ENCODE measurements at regions of chr14 and their contacts with region 1.

Region 1: GRCh38 chr14:70821584-70822529 is 12.5 kb upstream of the MAP3K9 start:
- DNase-seq: peak; percentile 70 to 90
- ATAC-seq: peak; percentile 59
- H3K4me3 ChIP-seq: peak overlapping the region; percentile 37 to 58
- H3K27ac ChIP-seq: no peak overlapping the region
- H3K4me1 ChIP-seq: no peaks in the 10 kb centered on the region
- H3K27me3 ChIP-seq: no peaks in the 10 kb centered on the region

Region 2: GRCh38 chr14:70901269-70901668 is 79.4 kb after region 1 on chr14:
- intact Hi-C with region 1: loop called (anchors 5 to 10 kb)
- DNase-seq: no peak
- ATAC-seq: no peak
- H3K4me3 ChIP-seq: no peak overlapping the region
- H3K27ac ChIP-seq: peak overlapping the region in 1 of 2 donors; percentile 93
- H3K4me1 ChIP-seq: peaks cover 12 to 14% of the 10 kb centered on the region in 2 donors
- H3K27me3 ChIP-seq: no peaks in the 10 kb centered on the region

Region 3: DNA sequence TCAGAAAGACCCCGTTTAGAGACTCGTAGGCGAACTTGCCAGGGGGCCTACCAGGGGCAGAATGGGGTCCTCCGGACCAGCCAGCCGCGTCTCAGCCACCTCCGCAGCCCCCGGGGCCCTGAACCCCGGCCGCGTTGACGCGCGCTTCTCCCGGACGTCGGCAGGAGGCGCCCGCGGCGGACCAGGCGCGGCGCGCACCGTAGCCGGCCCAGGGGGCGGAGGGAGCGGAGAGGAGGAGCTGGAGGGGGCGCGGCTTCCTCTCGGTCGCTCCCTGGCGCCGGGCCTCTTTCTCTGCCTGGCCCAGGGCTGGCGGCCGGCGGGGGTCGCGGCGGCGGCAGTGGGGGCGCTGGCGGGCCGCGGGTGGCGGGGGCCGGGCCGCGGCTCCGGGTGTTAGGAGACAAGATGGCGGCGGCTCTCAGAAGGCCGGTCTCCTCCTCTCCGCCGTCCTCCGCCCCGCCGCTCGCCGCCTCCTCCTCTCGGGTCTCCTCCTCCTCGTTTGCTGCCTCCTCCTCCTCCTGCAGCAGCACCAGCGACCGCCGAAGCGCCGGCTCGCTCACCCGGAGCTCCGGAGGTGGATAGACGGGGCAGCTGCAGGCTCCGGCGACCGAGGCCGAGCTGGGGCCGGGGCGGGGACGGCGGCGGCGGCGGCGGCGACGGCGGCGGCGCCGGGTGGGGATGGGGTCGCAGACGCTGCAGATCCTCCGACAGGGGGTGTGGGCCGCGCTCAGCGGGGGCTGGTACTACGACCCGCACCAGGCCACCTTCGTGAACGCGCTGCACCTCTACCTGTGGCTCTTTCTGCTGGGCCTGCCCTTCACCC is 85.5 kb after region 1 on chr14 and contains the start of gene PCNX1:
- intact Hi-C with region 1: loop called (anchors 5 to 10 kb)
- DNase-seq: peak; percentile 93 to 96
- ATAC-seq: peak; percentile 95
- H3K4me3 ChIP-seq: peak within 1 kb of the TSS; percentile 36 to 72
- H3K27ac ChIP-seq: peak within 1 kb of the TSS; percentile 97 to 98
- H3K4me1 ChIP-seq: peaks cover 9 to 10% of the 10 kb centered on the region in 2 donors
- H3K27me3 ChIP-seq: no peaks in the 10 kb centered on the region
- total RNA-seq, gene PCNX1: 72.8 to 96.4 TPM

Region 4: DNA sequence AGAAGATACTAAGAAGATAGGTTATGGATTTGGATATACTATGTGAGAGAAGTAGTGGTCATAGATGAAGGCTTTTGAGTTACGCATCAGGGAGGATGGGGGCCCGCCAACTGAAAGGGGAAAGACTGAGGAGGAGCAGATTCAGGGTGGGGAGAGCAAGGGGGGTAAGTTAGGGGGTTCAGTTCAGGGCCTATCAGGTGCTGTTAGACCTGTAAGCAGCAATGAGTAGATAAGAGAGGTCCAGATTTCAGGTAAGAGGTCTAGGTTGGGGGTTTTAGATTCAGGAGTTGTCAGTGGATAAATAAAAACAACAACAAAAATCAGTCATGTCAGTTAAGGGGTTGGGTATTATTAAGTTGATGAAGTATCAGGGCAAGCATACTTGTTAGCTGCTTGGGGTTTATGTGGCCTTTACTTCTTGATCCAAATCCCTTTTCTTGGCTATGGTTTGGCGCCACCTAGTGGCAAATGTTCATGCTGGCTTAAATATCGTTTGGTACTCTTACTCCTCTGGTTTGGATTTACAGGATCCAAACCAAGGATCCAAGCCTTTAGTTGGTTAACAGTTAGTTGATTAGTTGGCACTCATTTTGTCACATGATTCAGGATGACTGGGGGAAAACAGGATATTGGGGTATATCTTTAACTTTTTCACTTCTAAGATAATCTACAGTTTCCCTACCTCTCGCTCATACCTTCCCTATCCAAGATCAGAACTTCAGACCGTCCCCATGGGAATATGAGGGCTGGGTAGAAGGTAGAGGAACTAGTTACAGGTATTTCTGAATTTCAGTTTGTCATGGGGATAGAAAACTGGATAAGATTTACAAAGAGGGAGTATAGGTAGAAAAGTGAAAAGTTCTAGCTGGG is 150.5 kb after region 1 on chr14:
- intact Hi-C with region 1: loop called (anchors 2 to 5 kb)
- DNase-seq: peak; percentile 85 to 89
- ATAC-seq: peak; percentile 81
- H3K4me3 ChIP-seq: no peak overlapping the region
- H3K27ac ChIP-seq: no peak overlapping the region
- H3K4me1 ChIP-seq: peaks cover 0 to 3% of the 10 kb centered on the region in 2 donors
- H3K27me3 ChIP-seq: no peaks in the 10 kb centered on the region

Region 5: DNA sequence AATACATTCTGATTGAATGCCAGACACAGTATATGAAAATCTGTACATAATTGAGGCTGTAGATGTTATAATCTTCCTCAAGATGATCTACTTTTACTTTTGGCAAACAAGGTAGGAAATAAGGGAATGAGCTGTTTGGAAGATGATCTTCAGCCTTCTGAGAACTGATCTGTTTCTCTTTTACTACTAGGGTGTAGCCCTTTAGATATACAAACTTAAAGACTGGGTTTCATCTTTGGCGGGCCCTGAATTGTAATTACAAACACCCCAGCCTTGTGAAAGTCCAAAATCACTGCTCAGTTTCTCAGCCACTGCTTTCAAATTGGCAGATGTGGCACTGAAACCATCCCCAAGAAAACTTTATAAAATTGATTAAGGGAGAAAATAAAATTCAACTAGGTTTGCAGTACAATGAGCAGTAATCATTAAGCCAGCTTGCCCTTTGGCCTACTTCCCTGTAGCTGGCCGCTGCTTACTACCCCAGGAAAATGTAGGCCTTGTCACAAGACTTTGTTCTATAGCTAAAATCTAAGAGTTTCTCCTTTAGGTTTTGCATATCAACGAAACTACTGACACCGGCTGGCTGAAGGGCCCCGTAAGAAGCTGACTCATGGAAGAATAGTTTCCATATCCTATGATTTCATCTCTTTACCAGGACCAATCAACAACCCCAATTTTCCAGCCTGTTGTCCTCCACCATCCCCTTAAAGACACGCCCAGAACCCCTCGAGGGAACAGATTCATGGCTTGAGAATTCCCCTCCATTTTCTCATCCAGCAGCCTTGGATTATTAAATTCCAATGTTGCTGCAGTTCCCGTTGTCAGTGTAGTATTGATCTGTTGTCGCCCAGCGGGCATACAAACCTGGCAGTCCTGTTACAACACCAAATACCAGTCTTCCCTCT is 296.2 kb after region 1 on chr14:
- intact Hi-C with region 1: no loop called
- DNase-seq: no peak
- ATAC-seq: no peak
- H3K4me3 ChIP-seq: no peak overlapping the region
- H3K27ac ChIP-seq: no peak overlapping the region
- H3K4me1 ChIP-seq: peaks cover 0 to 3% of the 10 kb centered on the region in 2 donors
- H3K27me3 ChIP-seq: no peaks in the 10 kb centered on the region

Measured in aorta (tissue), 5 donors.